PC-3 (cell line): ENCODE measurements at regions of chr3 and their contacts with region 1.

Region 1: GRCh38 chr3:173938616-173939015 is 541.1 kb downstream of the NLGN1 start:
- DNase-seq: no peak
- ATAC-seq: peak; percentile 20; the same call in 1 of the 2 replicates
- H3K4me3 ChIP-seq: no peak overlapping the region
- H3K27ac ChIP-seq: no peak overlapping the region
- H3K4me1 ChIP-seq: peaks cover 9% of the 10 kb centered on the region; the same call in 1 of the 2 replicates
- H3K27me3 ChIP-seq: no peaks in the 10 kb centered on the region
- CTCF ChIP-seq: no peak

Region 2: GRCh38 chr3:173983343-173983742 is 44.7 kb after region 1 on chr3:
- CTCF ChIA-PET with region 1: no interaction called
- POLR2A ChIA-PET with region 1: no interaction called
- intact Hi-C with region 1: loop called (anchors 1 kb)
- DNase-seq: no peak
- ATAC-seq: no peak
- H3K4me3 ChIP-seq: no peak overlapping the region
- H3K27ac ChIP-seq: no peak overlapping the region
- H3K4me1 ChIP-seq: no peaks in the 10 kb centered on the region
- H3K27me3 ChIP-seq: no peaks in the 10 kb centered on the region
- CTCF ChIP-seq: no peak

Region 3: DNA sequence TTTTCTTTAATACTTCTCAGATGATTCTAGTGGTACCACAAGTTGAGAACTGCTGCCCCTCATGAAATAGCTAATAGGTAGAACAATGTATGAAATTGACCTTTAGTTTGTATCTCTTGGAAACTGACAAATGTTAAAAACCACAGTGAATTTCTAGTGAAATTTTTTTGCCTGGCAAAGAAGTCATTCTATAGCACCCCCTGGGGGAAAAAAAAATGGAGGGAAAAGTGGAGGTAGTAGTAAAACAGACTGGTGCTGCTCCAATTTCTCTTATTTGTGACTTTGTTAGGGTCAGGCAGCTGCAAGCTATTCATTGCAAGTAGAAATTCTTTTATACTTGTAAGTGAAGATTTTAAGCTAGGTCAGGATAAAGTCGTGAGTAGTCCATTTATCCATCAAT is 63.9 kb after region 1 on chr3:
- CTCF ChIA-PET with region 1: no interaction called
- POLR2A ChIA-PET with region 1: no interaction called
- intact Hi-C with region 1: no loop called
- DNase-seq: peak; percentile 50
- ATAC-seq: no peak
- H3K4me3 ChIP-seq: no peak overlapping the region
- H3K27ac ChIP-seq: no peak overlapping the region
- H3K4me1 ChIP-seq: no peaks in the 10 kb centered on the region
- H3K27me3 ChIP-seq: no peaks in the 10 kb centered on the region
- CTCF ChIP-seq: peak; percentile 63